HepG2 (cell line): ENCODE measurements at regions of chr18 and their contacts with region 1.

Region 1: DNA sequence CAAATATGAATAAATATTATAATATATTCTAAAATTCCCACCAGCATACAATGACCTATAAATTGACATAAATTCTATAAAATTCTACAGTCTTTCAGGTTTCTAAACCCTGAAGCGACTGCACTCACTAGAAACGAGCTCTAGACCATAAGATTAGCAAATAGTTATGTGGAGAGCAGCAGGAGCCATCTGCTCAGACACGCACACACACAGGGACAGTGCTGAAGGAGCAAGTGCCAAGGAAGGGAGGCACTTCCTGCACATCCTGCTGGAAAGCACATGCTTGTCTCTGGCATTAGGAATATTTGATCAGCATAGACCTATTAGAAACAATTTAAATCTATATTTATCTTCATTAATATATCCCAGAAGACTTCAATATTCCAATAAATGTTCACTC is 713.9 kb upstream of the CDH2 start:
- DNase-seq: no peak
- ATAC-seq: no peak
- H3K4me3 ChIP-seq: no peak overlapping the region
- H3K27ac ChIP-seq: no peak overlapping the region
- H3K4me1 ChIP-seq: no peaks in the 10 kb centered on the region
- H3K27me3 ChIP-seq: no peaks in the 10 kb centered on the region
- CTCF ChIP-seq: no peak
- EP300 ChIP-seq: no peak
- POLR2A ChIP-seq: no peak
- RAD21 ChIP-seq: no peak

Region 2: DNA sequence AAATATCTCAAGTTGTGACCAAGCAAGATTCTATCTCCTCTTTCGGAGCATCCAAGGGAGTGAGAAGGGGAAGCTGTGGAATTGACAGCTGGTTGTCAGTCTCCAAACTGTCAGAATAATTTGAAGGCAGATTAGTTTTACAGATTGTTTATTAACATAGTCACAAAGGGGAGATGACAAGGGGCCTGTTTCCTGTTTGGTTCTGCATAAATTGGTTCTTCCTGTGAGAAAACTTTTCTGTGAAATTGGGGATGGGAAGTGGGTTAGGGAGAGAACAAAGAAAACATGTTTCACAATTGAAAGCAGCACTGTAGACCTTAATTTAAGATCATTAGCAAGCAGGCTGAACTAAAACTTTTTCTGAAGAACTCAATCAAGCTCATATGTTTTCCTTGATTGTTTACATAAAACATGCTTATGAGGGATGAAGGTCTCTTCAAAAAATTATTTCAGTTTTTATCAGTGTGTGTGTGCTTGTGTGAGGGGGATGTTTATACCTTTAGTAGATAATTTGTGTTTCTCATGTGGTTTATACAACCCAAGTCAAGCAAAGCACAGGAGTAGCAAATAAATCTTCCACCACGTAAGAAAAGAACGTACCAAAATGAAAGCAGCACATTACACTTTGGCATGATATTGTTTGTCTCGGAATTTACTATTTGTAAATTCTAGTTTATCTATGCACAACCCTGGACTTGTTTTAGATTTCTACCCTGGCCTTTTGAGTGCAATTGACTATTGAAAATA is 109.0 kb before region 1 on chr18:
- CTCF ChIA-PET with region 1: no interaction called
- POLR2A ChIA-PET with region 1: no interaction called
- in situ Hi-C with region 1: no loop called
- intact Hi-C with region 1: no loop called
- DNase-seq: no peak
- ATAC-seq: no peak
- H3K4me3 ChIP-seq: no peak overlapping the region
- H3K27ac ChIP-seq: no peak overlapping the region
- H3K4me1 ChIP-seq: no peaks in the 10 kb centered on the region
- H3K27me3 ChIP-seq: no peaks in the 10 kb centered on the region
- CTCF ChIP-seq: no peak
- EP300 ChIP-seq: no peak
- POLR2A ChIP-seq: no peak
- RAD21 ChIP-seq: no peak

Region 3: DNA sequence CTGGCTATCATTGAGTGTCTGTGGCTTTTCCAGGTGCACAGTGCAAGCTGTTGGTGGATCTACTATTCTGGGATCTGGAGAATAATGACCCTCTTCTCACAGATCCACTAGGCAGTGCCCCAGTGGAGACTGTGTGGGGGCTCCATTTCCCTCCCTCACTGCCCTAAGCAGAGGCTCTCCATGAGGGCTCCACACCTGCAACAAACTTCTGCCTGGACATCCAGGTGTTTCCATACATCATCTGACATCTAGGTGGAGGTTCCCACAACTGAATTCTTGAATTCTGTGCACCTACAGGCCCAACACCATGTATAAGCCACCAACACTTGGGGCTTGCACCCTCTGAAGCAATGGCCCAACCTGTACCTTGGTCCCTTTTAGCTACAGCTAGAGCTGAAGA is 61.5 kb after region 1 on chr18:
- CTCF ChIA-PET with region 1: no interaction called
- POLR2A ChIA-PET with region 1: no interaction called
- in situ Hi-C with region 1: no loop called
- intact Hi-C with region 1: loop called (anchors 10 kb)
- DNase-seq: no peak
- ATAC-seq: no peak
- H3K4me3 ChIP-seq: no peak overlapping the region
- H3K27ac ChIP-seq: no peak overlapping the region
- H3K4me1 ChIP-seq: no peaks in the 10 kb centered on the region
- H3K27me3 ChIP-seq: no peaks in the 10 kb centered on the region
- CTCF ChIP-seq: no peak
- EP300 ChIP-seq: no peak
- POLR2A ChIP-seq: no peak
- RAD21 ChIP-seq: no peak

Region 4: GRCh38 chr18:29651121-29651680 is 760.4 kb after region 1 on chr18:
- CTCF ChIA-PET with region 1: no interaction called
- POLR2A ChIA-PET with region 1: no interaction called
- in situ Hi-C with region 1: no loop called
- intact Hi-C with region 1: no loop called
- DNase-seq: no peak
- ATAC-seq: no peak
- H3K4me3 ChIP-seq: no peak overlapping the region
- H3K27ac ChIP-seq: no peak overlapping the region
- H3K4me1 ChIP-seq: no peaks in the 10 kb centered on the region
- H3K27me3 ChIP-seq: no peaks in the 10 kb centered on the region
- CTCF ChIP-seq: no peak
- EP300 ChIP-seq: no peak
- POLR2A ChIP-seq: no peak
- RAD21 ChIP-seq: no peak